Calu3 (cell line): ENCODE measurements at regions of chr10 and their contacts with region 1.

Region 1: DNA sequence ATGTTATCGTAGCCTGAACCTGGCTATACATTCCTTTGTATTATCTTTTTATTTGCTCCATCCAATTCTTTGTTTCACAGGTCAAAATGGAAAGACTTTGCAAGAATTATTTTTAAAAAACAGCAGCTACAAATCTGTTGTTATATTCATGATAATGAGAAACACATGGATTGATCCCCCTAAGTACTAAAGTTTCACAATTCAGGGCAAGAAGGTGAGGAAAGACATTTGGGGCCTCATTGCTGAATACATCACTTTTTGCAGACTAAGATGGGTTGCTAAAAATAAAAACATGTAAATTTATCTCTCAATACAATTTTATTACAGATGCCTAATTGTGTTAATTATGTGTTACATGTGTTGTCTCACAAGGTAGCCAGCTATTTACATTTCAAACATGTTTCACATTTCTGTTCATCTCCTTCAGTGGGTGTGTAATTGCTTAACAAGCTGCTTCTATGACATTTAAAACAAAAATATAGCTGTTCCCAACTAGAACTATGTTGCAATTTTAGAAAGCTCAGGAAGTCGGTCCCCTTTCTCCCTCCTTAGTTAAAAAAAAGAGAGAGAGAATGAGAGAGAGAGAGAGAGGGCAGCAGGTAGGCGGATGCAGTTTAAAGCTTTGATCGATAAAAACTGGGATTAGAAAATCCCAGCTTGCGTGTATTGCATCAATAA is 606.3 kb upstream of the FZD8 start:
- DNase-seq: no peak
- H3K4me3 Mint-ChIP-seq: no peak overlapping the region
- H3K27ac Mint-ChIP-seq: no peak overlapping the region
- H3K4me1 Mint-ChIP-seq: no peaks in the 10 kb centered on the region
- H3K27me3 Mint-ChIP-seq: no peaks in the 10 kb centered on the region
- CTCF ChIP-seq: no peak

Region 2: GRCh38 chr10:36281871-36282331 is 33.5 kb after region 1 on chr10:
- CTCF ChIA-PET with region 1: interaction called, 13 read pairs
- intact Hi-C with region 1: no loop called
- DNase-seq: no peak
- H3K4me3 Mint-ChIP-seq: no peak overlapping the region
- H3K27ac Mint-ChIP-seq: no peak overlapping the region
- H3K4me1 Mint-ChIP-seq: no peaks in the 10 kb centered on the region
- H3K27me3 Mint-ChIP-seq: no peaks in the 10 kb centered on the region
- CTCF ChIP-seq: no peak